ENCODE measurements at regions of chr1 and their contacts with region 1.

Region 1: GRCh38 chr1:170586321-170587252 is 54.6 kb downstream of the GORAB start:
- DNase-seq: peak; percentile 88

Region 2: DNA sequence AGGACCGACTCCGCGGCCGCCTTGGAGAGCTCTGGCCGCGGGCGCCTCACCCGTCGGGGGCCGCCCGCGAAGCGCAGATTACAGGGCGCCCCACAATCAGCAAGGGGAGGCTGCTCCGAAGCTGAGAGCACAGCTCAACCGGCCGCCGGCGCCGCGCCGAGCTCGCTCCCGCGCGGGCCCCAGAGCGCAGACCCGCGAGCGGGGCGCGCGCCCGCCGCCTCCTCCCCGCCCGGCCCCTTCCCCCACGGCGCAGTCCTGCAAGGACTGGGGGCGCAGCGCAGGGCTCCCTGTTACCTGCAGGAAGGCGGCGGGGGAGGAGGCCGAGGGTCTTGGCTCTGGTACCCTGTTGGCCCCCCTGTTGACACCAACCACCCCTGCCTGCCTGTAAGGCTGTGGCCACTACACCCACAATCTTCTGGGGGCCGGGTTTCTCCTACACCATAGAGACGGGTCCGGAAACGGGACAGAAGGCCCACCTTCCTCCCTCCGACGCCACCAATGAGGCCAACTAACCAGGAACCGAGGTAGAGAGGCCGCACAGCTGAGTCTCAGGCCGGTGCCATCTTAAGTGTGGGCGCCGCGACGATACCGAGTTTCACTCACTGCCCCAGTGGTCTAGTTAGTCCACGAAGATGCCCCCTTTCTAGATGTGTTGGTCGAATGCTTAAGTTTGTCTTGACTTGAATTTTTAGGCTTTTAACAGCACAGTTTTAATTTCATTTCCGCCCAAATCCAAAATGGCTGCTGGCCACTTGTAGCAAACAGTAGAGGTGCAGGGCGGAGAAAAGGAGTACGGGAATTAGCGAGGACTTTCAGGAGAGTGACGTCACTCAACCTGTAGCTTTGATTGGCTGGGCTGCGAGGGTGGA is 692.9 kb before region 1 on chr1 and contains the start of gene SCYL3:
- intact Hi-C with region 1: no loop called
- DNase-seq: peak; percentile 98
- total RNA-seq, gene SCYL3: 8.0 to 8.4 TPM

Region 3: GRCh38 chr1:170531758-170532657 is 54.6 kb before region 1 on chr1 and contains the start of gene GORAB:
- intact Hi-C with region 1: loop called in 1 of 2 experiments (anchors 10 kb)
- DNase-seq: peak; percentile 97
- total RNA-seq, gene GORAB: 14.4 to 14.7 TPM

Region 4: GRCh38 chr1:170776777-170777176 is 190.2 kb after region 1 on chr1:
- intact Hi-C with region 1: no loop called
- DNase-seq: no peak

Measured in posterior vena cava (tissue), 2 donors.